GM13977 (cell line): ENCODE measurements at regions of chr1 and their contacts with region 1.

Region 1: DNA sequence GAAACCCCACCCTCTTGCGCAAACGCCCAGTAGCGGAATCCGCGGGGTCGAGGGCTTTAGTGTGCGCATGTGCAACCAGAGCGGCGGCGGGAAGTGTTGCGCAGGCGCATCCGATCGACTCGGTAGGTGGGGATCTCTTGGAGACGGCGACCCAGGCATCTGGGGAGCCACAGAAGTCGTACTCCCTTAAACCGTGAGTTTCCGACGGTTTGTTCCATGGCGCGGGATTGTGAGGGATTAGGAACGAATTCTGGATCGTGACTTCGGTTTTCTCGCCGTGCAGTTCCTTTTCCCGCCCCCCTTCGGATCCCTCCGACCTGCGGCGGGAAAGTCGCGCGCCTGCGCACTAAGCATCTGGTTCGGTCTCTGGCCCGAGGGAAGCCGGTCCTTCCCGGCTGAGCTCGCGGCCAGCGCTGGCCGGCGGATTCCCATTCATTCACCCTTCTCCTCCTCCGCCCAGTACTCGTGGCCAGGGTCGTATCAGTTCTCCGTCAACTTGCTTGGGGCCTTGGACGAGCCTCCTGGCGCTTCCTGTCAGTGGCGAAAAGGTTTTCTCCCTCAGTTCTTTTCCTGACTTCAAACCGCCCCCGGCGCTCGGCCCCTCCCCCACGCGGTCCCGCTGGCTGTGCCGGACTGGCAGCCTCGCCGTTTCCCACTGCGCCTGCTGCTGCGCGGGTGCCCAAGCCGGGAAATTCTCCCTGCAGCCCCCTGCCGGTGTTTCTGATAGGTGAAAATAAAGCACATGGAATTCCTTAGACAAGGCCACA is at the start of gene CDC7:
- DNase-seq: peak; percentile 90
- CTCF ChIP-seq: no peak

Region 2: GRCh38 chr1:91412371-91412770 is 88.6 kb before region 1 on chr1:
- in situ Hi-C with region 1: no loop called
- DNase-seq: no peak
- CTCF ChIP-seq: no peak

Region 3: GRCh38 chr1:91885716-91886506 is 385.0 kb after region 1 on chr1 and contains the start of gene TGFBR3:
- in situ Hi-C with region 1: loop called (anchors 25 kb)
- DNase-seq: peak; percentile 90
- CTCF ChIP-seq: peak; percentile 43

Region 4: DNA sequence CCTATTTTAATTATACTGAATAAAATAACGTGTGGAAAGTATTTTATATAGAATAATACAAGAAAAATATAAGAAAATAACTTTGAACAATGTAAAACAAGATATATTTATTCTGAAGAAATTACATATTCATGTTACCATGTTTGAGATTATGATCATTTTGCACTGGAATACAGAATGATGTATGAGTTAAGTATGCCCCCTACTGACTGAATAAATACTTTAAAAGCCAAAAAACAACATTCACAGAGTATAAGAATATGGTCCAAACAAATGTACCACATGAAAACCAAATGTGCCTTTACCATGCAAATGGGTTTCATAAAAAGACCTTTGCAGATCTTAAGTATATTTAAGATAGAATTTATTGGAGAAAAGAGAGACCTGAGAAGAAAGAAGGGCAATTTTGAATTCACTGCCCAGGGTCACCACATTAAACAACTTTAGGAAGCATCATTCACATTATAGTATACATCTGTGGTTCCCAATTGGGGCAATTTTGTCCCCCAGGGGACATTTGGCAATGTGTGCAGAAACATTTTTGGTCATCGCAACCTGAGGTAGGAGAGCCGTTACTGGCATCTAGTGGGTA is 1122.3 kb after region 1 on chr1:
- in situ Hi-C with region 1: loop called (anchors 25 kb)
- DNase-seq: peak; percentile 22
- CTCF ChIP-seq: peak; percentile 57